IMR-90 (cell line): ENCODE measurements at regions of chr9 and their contacts with region 1.

Region 1: GRCh38 chr9:119968836-119969707 is 599.8 kb upstream of the BRINP1 start:
- DNase-seq: peak; percentile 61
- ATAC-seq: peak; percentile 99
- H3K4me3 ChIP-seq: no peak overlapping the region
- H3K27ac ChIP-seq: no peak overlapping the region
- H3K4me1 ChIP-seq: peaks cover 2% of the 10 kb centered on the region
- H3K27me3 ChIP-seq: no peaks in the 10 kb centered on the region
- CTCF ChIP-seq: peak; percentile 94
- POLR2A ChIP-seq: no peak
- RAD21 ChIP-seq: peak; percentile 87

Region 2: GRCh38 chr9:119556129-119556875 is 412.8 kb before region 1 on chr9:
- CTCF ChIA-PET with region 1: interaction called, 13 read pairs
- POLR2A ChIA-PET with region 1: interaction called, 3 read pairs
- dilution Hi-C with region 1: no loop called
- in situ Hi-C with region 1: loop called (anchors 10 kb)
- intact Hi-C with region 1: loop called (anchors 1 kb)
- DNase-seq: peak; percentile 18
- ATAC-seq: peak; percentile 93
- H3K4me3 ChIP-seq: peak overlapping the region; percentile 40
- H3K27ac ChIP-seq: no peak overlapping the region
- H3K4me1 ChIP-seq: no peaks in the 10 kb centered on the region
- H3K27me3 ChIP-seq: no peaks in the 10 kb centered on the region
- CTCF ChIP-seq: peak; percentile 86
- POLR2A ChIP-seq: no peak
- RAD21 ChIP-seq: peak; percentile 77

Region 3: GRCh38 chr9:119951090-119951489 is 18.0 kb before region 1 on chr9:
- CTCF ChIA-PET with region 1: interaction called, 21 read pairs
- POLR2A ChIA-PET with region 1: no interaction called
- dilution Hi-C with region 1: no loop called
- in situ Hi-C with region 1: no loop called
- intact Hi-C with region 1: no loop called
- DNase-seq: peak; percentile 72
- ATAC-seq: peak; percentile 82
- H3K4me3 ChIP-seq: no peak overlapping the region
- H3K27ac ChIP-seq: peak overlapping the region; percentile 99; the same call in 1 of the 2 replicates
- H3K4me1 ChIP-seq: peaks cover 16% of the 10 kb centered on the region
- H3K27me3 ChIP-seq: no peaks in the 10 kb centered on the region
- CTCF ChIP-seq: no peak
- POLR2A ChIP-seq: no peak
- RAD21 ChIP-seq: no peak

Region 4: GRCh38 chr9:120284791-120285190 is 315.7 kb after region 1 on chr9:
- CTCF ChIA-PET with region 1: no interaction called
- POLR2A ChIA-PET with region 1: no interaction called
- dilution Hi-C with region 1: no loop called
- in situ Hi-C with region 1: no loop called
- intact Hi-C with region 1: no loop called
- DNase-seq: no peak
- ATAC-seq: no peak
- H3K4me3 ChIP-seq: no peak overlapping the region
- H3K27ac ChIP-seq: no peak overlapping the region
- H3K4me1 ChIP-seq: no peaks in the 10 kb centered on the region
- H3K27me3 ChIP-seq: no peaks in the 10 kb centered on the region
- CTCF ChIP-seq: no peak
- POLR2A ChIP-seq: no peak
- RAD21 ChIP-seq: no peak